ENCODE measurements at regions of chr3 and their contacts with region 1.

Region 1: GRCh38 chr3:189655617-189656016 is 24.4 kb downstream of the TP63 start:
- DNase-seq: no peak
- ATAC-seq: no peak
- H3K4me3 ChIP-seq: no peak overlapping the region
- H3K27ac ChIP-seq: no peak overlapping the region
- H3K4me1 ChIP-seq: no peaks in the 10 kb centered on the region
- H3K27me3 ChIP-seq: no peaks in the 10 kb centered on the region
- CTCF ChIP-seq: no peak

Region 2: DNA sequence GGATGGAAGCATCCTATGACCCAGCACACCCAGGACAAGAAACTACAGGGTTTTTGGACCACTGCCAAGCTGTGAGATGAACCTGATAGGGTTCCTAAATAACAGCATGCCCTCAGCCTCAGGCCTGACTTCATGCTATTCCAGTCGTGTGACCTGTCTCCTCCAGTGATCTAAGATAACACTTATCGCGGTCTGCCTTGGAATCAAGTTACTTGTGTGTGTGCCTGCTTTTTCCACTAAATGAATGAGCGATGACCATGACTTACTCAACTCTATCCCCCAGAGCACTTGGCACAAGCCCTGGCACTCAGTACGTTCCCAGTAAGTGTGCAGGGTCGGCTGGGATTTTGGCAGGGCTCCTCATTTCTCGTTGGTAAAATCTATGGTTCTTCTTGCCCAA is 197.1 kb before region 1 on chr3:
- CTCF ChIA-PET with region 1: no interaction called
- POLR2A ChIA-PET with region 1: no interaction called
- intact Hi-C with region 1: no loop called
- DNase-seq: peak; percentile 34
- ATAC-seq: no peak
- H3K4me3 ChIP-seq: no peak overlapping the region
- H3K27ac ChIP-seq: no peak overlapping the region
- H3K4me1 ChIP-seq: peaks cover 4% of the 10 kb centered on the region
- H3K27me3 ChIP-seq: no peaks in the 10 kb centered on the region
- CTCF ChIP-seq: no peak

Region 3: DNA sequence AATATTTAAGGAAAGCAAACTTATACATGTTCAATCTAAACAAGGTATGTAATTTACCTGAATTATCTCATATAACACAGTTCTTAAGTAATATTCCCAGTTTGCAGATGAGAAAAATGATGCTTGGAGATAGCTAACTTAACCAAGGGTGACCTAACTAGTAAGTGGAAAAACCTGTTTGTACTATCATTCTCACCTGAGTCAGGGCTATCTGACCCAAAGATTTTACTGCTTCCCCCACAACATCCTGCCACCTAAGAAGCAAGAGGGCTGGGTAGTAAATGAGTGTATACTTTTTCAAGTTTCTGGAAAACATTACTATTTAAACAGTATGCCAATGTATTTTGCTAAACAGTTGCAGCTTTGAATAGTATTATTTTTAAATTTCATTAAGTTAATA is 13.8 kb before region 1 on chr3:
- CTCF ChIA-PET with region 1: interaction called, 4 read pairs
- POLR2A ChIA-PET with region 1: no interaction called
- intact Hi-C with region 1: loop called (anchors 2 kb)
- DNase-seq: peak; percentile 87
- ATAC-seq: peak; percentile 85
- H3K4me3 ChIP-seq: peak overlapping the region; percentile 29; the same call in 1 of the 2 replicates
- H3K27ac ChIP-seq: peak overlapping the region; percentile 3; the same call in 1 of the 2 replicates
- H3K4me1 ChIP-seq: peaks cover 17% of the 10 kb centered on the region
- H3K27me3 ChIP-seq: no peaks in the 10 kb centered on the region
- CTCF ChIP-seq: no peak

Region 4: GRCh38 chr3:189710620-189711402 is 55.2 kb after region 1 on chr3:
- CTCF ChIA-PET with region 1: no interaction called
- POLR2A ChIA-PET with region 1: no interaction called
- intact Hi-C with region 1: no loop called
- DNase-seq: peak; percentile 95
- ATAC-seq: peak; percentile 71
- H3K4me3 ChIP-seq: no peak overlapping the region
- H3K27ac ChIP-seq: peak overlapping the region; percentile 66
- H3K4me1 ChIP-seq: peaks cover 55% of the 10 kb centered on the region
- H3K27me3 ChIP-seq: no peaks in the 10 kb centered on the region
- CTCF ChIP-seq: no peak